ENCODE measurements at regions of chr1 and their contacts with region 1.

Region 1: GRCh38 chr1:248243204-248243603 is 12.0 kb downstream of the OR2M4 start:
- DNase-seq: peak; percentile 67
- H3K4me3 Mint-ChIP-seq: peak overlapping the region; percentile 64
- H3K27ac Mint-ChIP-seq: no peak overlapping the region
- H3K4me1 Mint-ChIP-seq: peaks cover 13% of the 10 kb centered on the region
- H3K27me3 Mint-ChIP-seq: no peaks in the 10 kb centered on the region
- CTCF ChIP-seq: peak; percentile 92

Region 2: GRCh38 chr1:247681288-247681897 is 561.8 kb before region 1 on chr1:
- CTCF ChIA-PET with region 1: interaction called, 9 read pairs
- POLR2A ChIA-PET with region 1: no interaction called
- intact Hi-C with region 1: loop called (anchors 5 kb)
- DNase-seq: peak; percentile 82
- H3K4me3 Mint-ChIP-seq: no peak overlapping the region
- H3K27ac Mint-ChIP-seq: no peak overlapping the region
- H3K4me1 Mint-ChIP-seq: peaks cover 6% of the 10 kb centered on the region
- H3K27me3 Mint-ChIP-seq: no peaks in the 10 kb centered on the region
- CTCF ChIP-seq: peak; percentile 99

Region 3: GRCh38 chr1:247701338-247701737 is 541.9 kb before region 1 on chr1:
- CTCF ChIA-PET with region 1: interaction called, 3 read pairs
- POLR2A ChIA-PET with region 1: no interaction called
- intact Hi-C with region 1: loop called (anchors 5 kb)
- DNase-seq: no peak
- H3K4me3 Mint-ChIP-seq: no peak overlapping the region
- H3K27ac Mint-ChIP-seq: no peak overlapping the region
- H3K4me1 Mint-ChIP-seq: peaks cover 5% of the 10 kb centered on the region
- H3K27me3 Mint-ChIP-seq: no peaks in the 10 kb centered on the region
- CTCF ChIP-seq: no peak

Region 4: DNA sequence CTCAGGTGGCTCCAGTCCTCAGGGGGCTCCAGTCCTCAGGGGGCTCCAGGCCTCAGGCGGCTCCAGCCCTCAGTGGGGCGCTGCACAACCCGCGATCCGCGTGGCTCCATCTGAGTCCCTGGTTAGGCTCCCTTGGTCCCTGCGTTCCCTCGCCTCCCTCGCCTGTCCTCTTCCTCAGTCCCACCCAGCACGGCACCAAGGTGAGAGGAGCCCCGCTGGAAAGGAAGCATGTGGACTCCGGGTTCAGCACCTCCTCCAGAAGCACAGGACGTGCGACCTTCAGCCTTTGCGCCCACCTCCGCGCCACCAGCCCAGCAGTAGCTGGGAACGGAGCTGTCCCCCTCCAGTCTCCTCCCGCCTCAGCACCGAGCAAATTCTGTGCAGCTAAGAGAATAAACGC is 106.4 kb before region 1 on chr1:
- CTCF ChIA-PET with region 1: no interaction called
- POLR2A ChIA-PET with region 1: no interaction called
- intact Hi-C with region 1: no loop called
- DNase-seq: no peak
- H3K4me3 Mint-ChIP-seq: no peak overlapping the region
- H3K27ac Mint-ChIP-seq: no peak overlapping the region
- H3K4me1 Mint-ChIP-seq: peaks cover 26% of the 10 kb centered on the region
- H3K27me3 Mint-ChIP-seq: no peaks in the 10 kb centered on the region
- CTCF ChIP-seq: no peak

Region 5: GRCh38 chr1:248215880-248216279 is 27.3 kb before region 1 on chr1:
- CTCF ChIA-PET with region 1: interaction called, 13 read pairs
- POLR2A ChIA-PET with region 1: interaction called, 3 read pairs
- intact Hi-C with region 1: no loop called
- DNase-seq: no peak
- H3K4me3 Mint-ChIP-seq: no peak overlapping the region
- H3K27ac Mint-ChIP-seq: no peak overlapping the region
- H3K4me1 Mint-ChIP-seq: no peaks in the 10 kb centered on the region
- H3K27me3 Mint-ChIP-seq: no peaks in the 10 kb centered on the region
- CTCF ChIP-seq: no peak

Region 6: GRCh38 chr1:248229360-248229908 is 13.8 kb before region 1 on chr1:
- CTCF ChIA-PET with region 1: interaction called, 26 read pairs
- POLR2A ChIA-PET with region 1: interaction called, 4 read pairs
- intact Hi-C with region 1: no loop called
- DNase-seq: no peak
- H3K4me3 Mint-ChIP-seq: no peak overlapping the region
- H3K27ac Mint-ChIP-seq: no peak overlapping the region
- H3K4me1 Mint-ChIP-seq: no peaks in the 10 kb centered on the region
- H3K27me3 Mint-ChIP-seq: no peaks in the 10 kb centered on the region
- CTCF ChIP-seq: no peak

Region 7: DNA sequence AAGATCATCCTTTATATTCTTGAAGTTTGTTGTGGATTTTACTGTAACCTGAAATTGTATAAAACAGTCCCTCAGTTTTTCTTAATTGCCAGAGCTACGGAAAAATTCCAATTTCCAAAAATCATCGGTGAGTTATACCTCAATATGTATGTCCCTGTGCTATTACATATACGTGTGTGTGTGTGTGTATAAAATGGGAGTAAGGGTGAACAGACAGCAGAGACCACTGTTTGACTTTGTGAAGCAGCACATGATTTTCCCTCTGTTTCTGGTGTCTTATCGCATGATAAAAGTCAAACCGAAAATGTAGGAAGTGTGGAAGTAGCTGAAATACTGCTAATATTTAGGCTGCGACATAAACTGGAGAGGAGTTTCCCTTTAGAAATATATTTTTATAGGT is 160.8 kb after region 1 on chr1:
- CTCF ChIA-PET with region 1: interaction called, 6 read pairs
- POLR2A ChIA-PET with region 1: no interaction called
- intact Hi-C with region 1: loop called (anchors 5 kb)
- DNase-seq: peak; percentile 27
- H3K4me3 Mint-ChIP-seq: no peak overlapping the region
- H3K27ac Mint-ChIP-seq: no peak overlapping the region
- H3K4me1 Mint-ChIP-seq: peaks cover 5% of the 10 kb centered on the region
- H3K27me3 Mint-ChIP-seq: no peaks in the 10 kb centered on the region
- CTCF ChIP-seq: no peak

Region 8: DNA sequence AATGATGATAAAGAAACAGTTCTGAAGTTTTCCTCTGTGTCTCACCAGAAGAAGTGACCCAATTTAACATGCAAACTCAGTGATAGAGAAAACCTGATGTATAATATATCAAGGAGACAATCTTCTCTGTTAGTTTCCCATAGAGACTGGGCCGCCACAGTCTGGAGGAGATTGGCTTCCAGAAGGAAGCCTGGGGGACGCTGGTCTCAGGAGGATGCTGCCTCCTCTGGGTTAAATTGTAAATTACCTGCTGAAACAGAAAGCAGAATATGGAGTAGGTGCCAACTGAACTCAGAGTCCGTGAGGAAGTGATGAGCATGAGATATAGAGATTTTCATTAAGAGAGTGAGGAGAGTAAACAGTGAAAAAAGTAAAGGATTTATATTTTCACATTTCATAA is 443.6 kb after region 1 on chr1:
- CTCF ChIA-PET with region 1: interaction called, 6 read pairs
- POLR2A ChIA-PET with region 1: no interaction called
- intact Hi-C with region 1: loop called (anchors 2 kb)
- DNase-seq: peak; percentile 38
- H3K4me3 Mint-ChIP-seq: no peak overlapping the region
- H3K27ac Mint-ChIP-seq: peak overlapping the region; percentile 0
- H3K4me1 Mint-ChIP-seq: peaks cover 18% of the 10 kb centered on the region
- H3K27me3 Mint-ChIP-seq: no peaks in the 10 kb centered on the region
- CTCF ChIP-seq: peak; percentile 81